HCT116 (cell line): ENCODE measurements at regions of chr11 and their contacts with region 1.

Region 1: DNA sequence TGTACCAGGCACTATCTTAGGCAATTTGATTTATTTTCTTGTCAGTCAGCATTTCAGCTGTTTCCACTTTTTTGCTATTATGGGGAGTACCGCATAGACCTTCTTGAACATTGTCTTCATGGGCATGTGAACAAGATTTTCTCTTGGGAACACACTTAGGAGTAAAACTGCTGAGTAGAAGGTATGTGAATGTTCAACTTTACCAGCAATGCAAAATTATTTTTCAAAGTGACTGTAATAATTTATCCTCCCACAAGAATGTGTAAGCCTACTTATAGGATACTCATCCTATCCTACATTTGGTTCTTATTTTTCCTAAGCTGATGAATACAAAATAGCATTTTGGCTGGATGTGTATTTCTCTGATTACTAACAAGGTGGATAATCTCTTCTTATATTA is 132.0 kb upstream of the NAV2 start:
- DNase-seq: no peak
- ATAC-seq: no peak
- H3K4me3 ChIP-seq: no peak overlapping the region
- H3K27ac ChIP-seq: no peak overlapping the region
- H3K4me1 ChIP-seq: no peaks in the 10 kb centered on the region
- H3K27me3 ChIP-seq: no peaks in the 10 kb centered on the region
- CTCF ChIP-seq: no peak
- POLR2A ChIP-seq: no peak
- RAD21 ChIP-seq: no peak

Region 2: DNA sequence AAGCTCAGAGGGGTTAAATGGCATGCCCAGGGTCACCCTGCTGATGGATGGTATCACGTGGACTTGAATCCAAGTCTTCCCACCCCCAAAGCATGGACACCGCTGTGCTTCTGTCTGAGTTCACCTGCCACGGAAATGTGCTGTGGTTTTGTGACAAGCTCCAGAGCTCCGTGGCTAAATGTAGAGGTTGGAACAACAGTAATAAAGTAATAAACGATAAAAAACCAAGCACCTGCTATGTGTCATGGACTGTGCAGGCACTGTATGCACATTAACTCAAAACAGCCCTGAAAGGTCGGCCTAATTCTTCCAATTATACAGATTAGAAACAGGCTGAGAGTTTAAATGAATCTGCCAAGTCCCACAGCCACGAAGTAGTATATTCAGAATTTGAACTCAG is 50.1 kb before region 1 on chr11:
- CTCF ChIA-PET with region 1: no interaction called
- POLR2A ChIA-PET with region 1: no interaction called
- RAD21 ChIA-PET with region 1: no interaction called
- intact Hi-C with region 1: loop called (anchors 5 kb)
- DNase-seq: no peak
- ATAC-seq: no peak
- H3K4me3 ChIP-seq: no peak overlapping the region
- H3K27ac ChIP-seq: no peak overlapping the region
- H3K4me1 ChIP-seq: no peaks in the 10 kb centered on the region
- H3K27me3 ChIP-seq: peaks cover 47% of the 10 kb centered on the region
- CTCF ChIP-seq: no peak
- POLR2A ChIP-seq: no peak
- RAD21 ChIP-seq: no peak